Panc1 (cell line): ENCODE measurements at regions of chr9 and their contacts with region 1.

Region 1: DNA sequence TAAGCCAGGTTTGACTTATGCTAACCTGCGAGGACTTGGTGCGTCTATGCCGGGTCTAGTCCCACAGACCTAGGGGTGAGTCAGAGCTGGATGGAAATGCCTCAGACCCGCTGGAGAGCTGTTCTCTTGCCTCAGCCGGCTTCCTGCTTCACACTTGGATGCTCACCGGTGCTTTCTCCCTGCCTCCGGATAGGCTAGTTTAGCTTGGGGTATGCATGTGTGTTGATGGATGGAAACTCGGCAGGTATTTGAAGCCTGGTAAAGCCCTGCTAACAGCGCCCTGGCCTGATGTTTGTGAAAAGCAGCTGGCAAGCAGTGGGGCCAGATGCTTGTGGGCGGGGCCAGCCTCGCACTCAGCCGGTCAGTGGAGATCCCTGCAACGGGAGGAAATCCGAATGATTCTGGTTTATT is 29.3 kb downstream of the PRRC2B start:
- DNase-seq: no peak
- ATAC-seq: peak; percentile 81
- H3K4me3 ChIP-seq: peak overlapping the region in 1 of 2 experiments; percentile 16; a peak in 2 of 4 replicates
- H3K27ac ChIP-seq: peak overlapping the region; percentile 68
- H3K4me1 ChIP-seq: peaks cover 53% of the 10 kb centered on the region
- H3K27me3 ChIP-seq: no peaks in the 10 kb centered on the region
- CTCF ChIP-seq: no peak

Region 2: GRCh38 chr9:131082774-131083512 is 340.2 kb before region 1 on chr9:
- CTCF ChIA-PET with region 1: no interaction called
- POLR2A ChIA-PET with region 1: no interaction called
- in situ Hi-C with region 1: no loop called
- intact Hi-C with region 1: no loop called
- DNase-seq: no peak
- ATAC-seq: no peak
- H3K4me3 ChIP-seq: no peak overlapping the region
- H3K27ac ChIP-seq: no peak overlapping the region
- H3K4me1 ChIP-seq: peaks cover 4% of the 10 kb centered on the region
- H3K27me3 ChIP-seq: no peaks in the 10 kb centered on the region
- CTCF ChIP-seq: no peak

Region 3: DNA sequence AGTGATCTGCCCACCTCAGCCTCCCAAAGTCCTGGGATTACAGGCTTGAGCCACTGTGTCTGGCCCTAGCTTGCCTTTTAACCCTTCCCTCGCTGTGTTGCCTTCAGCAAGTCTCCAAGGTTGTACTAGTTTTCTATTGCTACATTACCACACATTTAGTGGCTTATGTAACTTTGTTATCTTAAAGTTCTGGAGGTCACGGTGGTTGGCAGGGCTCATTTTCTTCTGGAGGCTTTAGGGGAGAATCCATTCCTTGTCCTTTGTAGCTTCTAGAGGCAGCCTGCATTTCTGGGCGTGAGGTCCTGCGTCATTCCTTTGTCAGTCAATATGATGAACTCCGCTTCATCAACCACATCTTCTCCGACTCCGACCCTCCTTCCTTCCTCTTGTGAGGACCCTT is 32.2 kb before region 1 on chr9:
- CTCF ChIA-PET with region 1: interaction called, 15 read pairs
- POLR2A ChIA-PET with region 1: no interaction called
- in situ Hi-C with region 1: no loop called
- intact Hi-C with region 1: no loop called
- DNase-seq: no peak
- ATAC-seq: no peak
- H3K4me3 ChIP-seq: no peak overlapping the region
- H3K27ac ChIP-seq: no peak overlapping the region; the same call in 1 of the 2 replicates
- H3K4me1 ChIP-seq: peaks cover 4% of the 10 kb centered on the region
- H3K27me3 ChIP-seq: no peaks in the 10 kb centered on the region
- CTCF ChIP-seq: no peak

Region 4: DNA sequence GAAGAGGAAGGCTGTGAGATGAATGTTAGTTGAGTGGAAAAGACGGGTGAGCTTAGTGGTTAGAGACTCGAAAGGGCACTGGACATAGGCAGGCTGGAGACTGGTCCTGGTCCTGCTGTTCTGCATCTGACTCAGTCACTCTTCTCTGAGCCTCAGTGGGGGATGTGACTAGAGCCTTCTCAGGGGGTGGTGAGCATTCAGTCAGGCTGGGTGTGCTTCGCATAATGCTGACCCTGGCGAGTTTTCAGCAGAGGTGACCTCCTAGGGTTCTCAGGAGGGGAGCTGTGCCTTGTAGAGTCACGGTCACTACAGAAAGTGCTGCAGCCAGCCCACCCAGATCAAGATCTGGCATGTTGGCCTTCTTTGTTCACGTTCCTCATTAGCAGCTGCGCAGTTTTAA is 15.0 kb after region 1 on chr9:
- CTCF ChIA-PET with region 1: no interaction called
- POLR2A ChIA-PET with region 1: interaction called, 10 read pairs
- in situ Hi-C with region 1: no loop called
- intact Hi-C with region 1: no loop called
- DNase-seq: no peak
- ATAC-seq: no peak
- H3K4me3 ChIP-seq: no peak overlapping the region
- H3K27ac ChIP-seq: no peak overlapping the region
- H3K4me1 ChIP-seq: no peaks in the 10 kb centered on the region
- H3K27me3 ChIP-seq: no peaks in the 10 kb centered on the region
- CTCF ChIP-seq: no peak

Region 5: DNA sequence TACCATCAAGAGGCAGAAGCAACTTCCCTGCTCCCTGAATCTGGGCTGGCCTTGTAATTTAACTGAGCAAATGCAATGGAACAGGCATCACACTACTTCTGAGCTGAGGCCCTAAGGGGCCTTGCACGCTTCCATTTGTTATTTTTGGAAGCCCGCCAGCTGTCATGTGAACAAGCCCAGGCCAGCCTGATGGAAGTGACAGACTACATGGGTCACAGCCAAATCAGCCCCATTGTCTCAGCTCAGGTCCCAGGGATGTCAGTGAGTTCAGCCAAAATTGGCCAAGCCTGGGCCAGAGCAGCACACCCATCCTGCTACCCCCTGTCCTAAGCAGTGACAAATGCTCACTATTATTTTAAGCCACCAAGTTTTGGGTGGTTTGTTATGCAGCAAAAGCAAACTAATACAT is 194.9 kb after region 1 on chr9:
- CTCF ChIA-PET with region 1: no interaction called
- POLR2A ChIA-PET with region 1: no interaction called
- in situ Hi-C with region 1: no loop called
- intact Hi-C with region 1: no loop called
- DNase-seq: no peak
- ATAC-seq: no peak
- H3K4me3 ChIP-seq: no peak overlapping the region
- H3K27ac ChIP-seq: no peak overlapping the region
- H3K4me1 ChIP-seq: no peaks in the 10 kb centered on the region
- H3K27me3 ChIP-seq: no peaks in the 10 kb centered on the region
- CTCF ChIP-seq: no peak

Region 6: DNA sequence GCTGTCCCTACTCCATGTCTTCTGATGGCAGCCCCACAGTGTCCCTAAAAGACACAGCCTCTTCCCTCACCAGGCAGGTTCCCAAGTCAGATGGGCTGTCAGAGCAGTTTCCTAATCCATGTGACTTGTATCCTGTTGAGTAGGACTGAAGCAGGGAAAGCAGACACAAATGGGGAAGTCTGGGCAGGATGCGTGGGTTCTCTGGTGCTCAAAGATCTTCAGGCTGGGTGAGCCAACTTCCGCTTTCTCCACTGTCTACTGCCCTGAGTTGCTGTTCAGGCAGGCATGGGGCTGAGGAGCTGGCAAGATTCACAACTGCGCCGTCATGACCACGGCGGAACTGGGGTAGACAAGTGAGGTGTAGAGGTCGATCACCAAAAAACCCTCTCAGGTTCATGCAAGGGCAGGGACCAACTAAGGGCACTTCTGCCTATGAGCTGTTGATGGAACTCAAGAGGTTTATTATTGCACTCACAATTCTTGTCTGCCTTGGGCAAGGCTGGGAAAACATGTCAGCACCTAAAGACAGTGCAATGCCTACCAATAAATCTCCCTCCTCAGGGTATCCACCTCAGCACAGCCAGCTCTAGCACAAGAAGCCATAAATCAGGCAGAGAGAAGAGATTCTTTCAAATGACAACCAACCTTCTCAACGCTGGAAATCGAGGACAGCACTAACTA is 233.3 kb after region 1 on chr9:
- CTCF ChIA-PET with region 1: no interaction called
- POLR2A ChIA-PET with region 1: no interaction called
- in situ Hi-C with region 1: no loop called
- intact Hi-C with region 1: no loop called
- DNase-seq: no peak
- ATAC-seq: no peak
- H3K4me3 ChIP-seq: no peak overlapping the region
- H3K27ac ChIP-seq: peak overlapping the region; percentile 95
- H3K4me1 ChIP-seq: peaks cover 56% of the 10 kb centered on the region
- H3K27me3 ChIP-seq: no peaks in the 10 kb centered on the region
- CTCF ChIP-seq: no peak